A549 (cell line): ENCODE measurements at regions of chr11 and their contacts with region 1.

Region 1: DNA sequence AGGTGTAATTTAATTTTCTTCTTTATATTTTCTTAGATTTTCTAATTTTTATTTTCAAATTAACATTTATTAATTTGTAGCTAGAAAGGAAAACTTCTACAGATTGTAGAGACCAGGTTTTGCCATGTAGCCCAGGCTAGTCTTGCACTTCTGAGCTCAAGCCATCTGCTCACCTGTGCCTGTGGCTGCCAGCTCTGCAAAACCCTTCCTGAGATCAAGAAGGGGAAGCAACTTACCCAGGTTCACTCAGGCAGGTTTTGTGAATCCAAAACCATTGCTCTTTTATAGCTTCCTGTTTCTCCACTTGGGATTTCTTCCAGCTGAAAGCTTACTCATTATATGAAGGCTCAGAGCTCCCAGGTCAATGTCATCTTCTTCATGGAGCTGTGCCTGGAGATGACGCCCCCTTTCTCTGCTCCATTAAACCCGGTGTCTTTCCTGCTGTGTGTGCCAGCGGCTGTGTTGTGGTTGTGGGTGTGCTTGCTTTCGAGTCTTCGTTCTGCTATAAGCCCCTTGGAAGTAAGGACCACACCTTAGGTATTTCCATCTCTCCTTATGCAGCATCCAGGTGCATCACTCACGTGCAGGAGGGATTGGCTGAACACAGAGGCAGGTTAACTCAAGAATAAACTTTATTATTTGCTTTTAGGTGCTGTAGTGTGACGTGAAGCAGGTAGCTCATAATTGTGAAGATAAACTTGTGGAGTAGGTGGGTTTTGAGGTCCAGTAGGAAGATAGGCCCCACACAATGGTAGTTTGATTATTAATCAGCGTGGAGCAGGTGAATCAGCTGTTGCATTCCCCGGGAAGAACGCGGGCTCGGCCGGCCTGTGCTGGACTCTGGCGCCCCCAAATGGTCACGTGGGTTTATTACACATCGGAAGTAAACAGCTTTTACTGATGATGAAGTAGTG is 42.2 kb upstream of the INCENP start:
- DNase-seq: peak; percentile 72 to 76
- ATAC-seq: peak; percentile 89 to 94
- H3K4me3 ChIP-seq: no peak overlapping the region
- H3K27ac ChIP-seq: peak overlapping the region; percentile 20 to 66; a peak in 5 of 6 replicates
- H3K4me1 ChIP-seq: peaks cover 9% of the 10 kb centered on the region; the same call in 2 of the 3 replicates
- CTCF ChIP-seq: peak; percentile 96
- EP300 ChIP-seq: no peak
- POLR2A ChIP-seq: no peak
- RAD21 ChIP-seq: peak; percentile 98 to 99

Region 2: GRCh38 chr11:61747192-61747966 is 334.3 kb before region 1 on chr11:
- CTCF ChIA-PET with region 1: interaction called, 15 read pairs
- POLR2A ChIA-PET with region 1: no interaction called
- DNase-seq: peak; percentile 78 to 79
- ATAC-seq: peak; percentile 76 to 93
- H3K4me3 ChIP-seq: no peak overlapping the region
- H3K27ac ChIP-seq: peak overlapping the region; percentile 40 to 70; a peak in 5 of 6 replicates
- H3K4me1 ChIP-seq: peaks cover 14% of the 10 kb centered on the region
- CTCF ChIP-seq: peak; percentile 89
- EP300 ChIP-seq: no peak
- POLR2A ChIP-seq: no peak
- RAD21 ChIP-seq: peak; percentile 88 to 91

Region 3: GRCh38 chr11:61879711-61880430 is 201.8 kb before region 1 on chr11:
- CTCF ChIA-PET with region 1: interaction called, 37 read pairs
- POLR2A ChIA-PET with region 1: no interaction called
- DNase-seq: no peak
- ATAC-seq: no peak
- H3K4me3 ChIP-seq: no peak overlapping the region
- H3K27ac ChIP-seq: no peak overlapping the region
- H3K4me1 ChIP-seq: peaks cover 13% of the 10 kb centered on the region
- CTCF ChIP-seq: no peak
- EP300 ChIP-seq: no peak
- POLR2A ChIP-seq: no peak
- RAD21 ChIP-seq: no peak

Region 4: DNA sequence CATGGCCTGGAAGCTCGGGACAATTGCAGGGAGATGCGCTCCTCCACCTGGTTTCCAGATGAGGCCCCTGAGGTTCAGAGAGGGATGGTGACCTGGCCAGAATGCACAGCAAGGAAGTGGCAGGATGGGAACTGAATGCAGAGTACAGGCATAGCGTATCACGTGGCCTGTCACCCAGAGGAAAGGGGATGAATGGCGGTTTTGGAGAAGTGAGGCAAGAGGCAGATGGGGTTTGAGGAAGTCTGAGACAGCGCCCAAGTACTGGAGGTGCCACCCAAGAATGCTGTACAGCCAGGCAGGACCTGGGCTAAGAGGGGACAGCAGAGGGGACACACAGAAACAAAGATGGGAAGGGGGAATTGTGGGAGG is 169.1 kb before region 1 on chr11:
- CTCF ChIA-PET with region 1: interaction called, 18 read pairs
- POLR2A ChIA-PET with region 1: no interaction called
- DNase-seq: no peak
- ATAC-seq: no peak
- H3K4me3 ChIP-seq: no peak overlapping the region
- H3K27ac ChIP-seq: no peak overlapping the region
- H3K4me1 ChIP-seq: peaks cover 5% of the 10 kb centered on the region; the same call in 1 of the 3 replicates
- CTCF ChIP-seq: no peak
- EP300 ChIP-seq: no peak
- POLR2A ChIP-seq: no peak
- RAD21 ChIP-seq: no peak

Region 5: DNA sequence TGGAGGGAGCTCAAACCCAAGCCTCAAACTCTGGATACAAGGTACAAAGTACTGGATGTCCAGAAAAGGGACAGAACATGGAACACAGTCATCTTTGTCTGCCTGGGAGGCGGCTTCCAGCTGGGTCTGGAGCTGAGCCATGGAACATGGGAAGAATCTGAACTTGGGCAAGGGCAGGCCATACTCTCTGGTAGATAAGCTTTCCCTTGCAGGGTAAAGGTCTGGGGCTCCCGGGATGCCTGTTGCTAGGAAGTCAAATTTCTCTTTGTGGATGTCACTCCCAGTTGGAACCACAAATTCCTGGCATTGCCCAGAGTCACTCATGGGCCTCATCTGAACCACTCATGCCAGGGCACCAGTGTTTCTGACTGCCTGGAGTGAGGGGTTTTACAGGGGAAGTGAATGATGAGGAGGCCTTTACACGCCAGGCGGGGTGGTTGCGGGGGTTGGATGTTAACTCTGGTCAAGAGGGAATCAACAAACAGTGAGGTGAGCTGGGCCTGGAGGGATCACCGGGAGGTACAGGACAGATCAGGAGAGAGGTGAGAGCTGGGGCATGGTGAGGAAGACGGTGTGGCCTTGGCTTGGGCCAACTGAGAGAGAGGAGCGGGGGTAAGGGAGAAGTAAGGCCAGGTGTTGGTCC is 119.9 kb before region 1 on chr11:
- CTCF ChIA-PET with region 1: interaction called, 34 read pairs
- POLR2A ChIA-PET with region 1: interaction called, 18 read pairs
- DNase-seq: peak; percentile 41 to 72
- ATAC-seq: peak; percentile 21 to 54
- H3K4me3 ChIP-seq: no peak overlapping the region
- H3K27ac ChIP-seq: peak overlapping the region; percentile 97 to 99
- H3K4me1 ChIP-seq: peaks cover 48% of the 10 kb centered on the region
- CTCF ChIP-seq: no peak
- EP300 ChIP-seq: no peak
- POLR2A ChIP-seq: no peak
- RAD21 ChIP-seq: no peak

Region 6: GRCh38 chr11:62069986-62070919 is 11.4 kb before region 1 on chr11:
- CTCF ChIA-PET with region 1: interaction called, 56 read pairs
- POLR2A ChIA-PET with region 1: no interaction called
- DNase-seq: no peak
- ATAC-seq: peak; percentile 34 to 40; a peak in 2 of 6 replicates
- H3K4me3 ChIP-seq: no peak overlapping the region
- H3K27ac ChIP-seq: no peak overlapping the region
- H3K4me1 ChIP-seq: no peaks in the 10 kb centered on the region
- CTCF ChIP-seq: no peak
- EP300 ChIP-seq: no peak
- POLR2A ChIP-seq: no peak
- RAD21 ChIP-seq: no peak

Region 7: GRCh38 chr11:62193952-62194351 is 112.3 kb after region 1 on chr11:
- CTCF ChIA-PET with region 1: no interaction called
- POLR2A ChIA-PET with region 1: no interaction called
- DNase-seq: no peak
- ATAC-seq: peak; percentile 54 to 71
- H3K4me3 ChIP-seq: no peak overlapping the region
- H3K27ac ChIP-seq: no peak overlapping the region
- H3K4me1 ChIP-seq: no peaks in the 10 kb centered on the region
- CTCF ChIP-seq: no peak
- EP300 ChIP-seq: no peak
- POLR2A ChIP-seq: no peak
- RAD21 ChIP-seq: no peak